Posterior vena cava (tissue), 2 donors: ENCODE measurements at regions of chr17 and their contacts with region 1.

Region 1: DNA sequence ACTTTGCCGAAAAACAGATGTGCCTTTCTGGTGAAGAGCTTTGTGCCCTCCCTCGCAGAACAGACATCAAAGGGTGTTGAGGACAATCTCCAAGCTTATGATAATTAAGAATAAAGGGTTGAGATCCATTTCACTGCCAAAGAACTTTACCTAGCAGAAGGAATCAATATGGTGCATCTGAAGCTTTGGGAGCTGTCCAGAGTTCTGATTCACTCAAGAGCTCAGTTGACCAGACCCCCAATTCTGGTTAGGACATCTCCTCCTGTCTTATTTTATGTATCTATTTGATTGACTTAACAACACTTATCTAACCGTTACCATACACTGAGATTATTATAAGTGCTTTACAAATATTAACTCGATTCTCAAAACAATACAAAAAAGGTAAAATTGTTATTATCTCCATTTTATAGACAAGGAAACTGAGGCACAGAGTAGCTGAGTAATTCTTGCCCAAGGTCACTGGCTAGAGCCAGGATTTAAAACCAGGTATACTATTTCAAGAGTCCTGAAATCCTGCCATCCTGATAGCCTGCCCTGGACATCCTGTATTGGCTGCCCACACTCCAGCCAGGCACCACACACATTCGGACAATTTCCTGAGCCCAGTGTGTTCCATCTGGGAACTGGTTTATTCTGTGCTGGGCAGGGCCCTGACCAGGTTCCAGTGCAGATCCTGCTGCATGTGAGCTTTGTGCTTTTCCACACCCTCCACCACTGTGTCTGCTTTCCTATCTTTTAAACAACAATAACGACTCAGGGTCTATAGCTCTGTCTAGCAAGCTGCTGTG is 29.8 kb downstream of the PITPNM3 start:
- DNase-seq: no peak

Region 2: DNA sequence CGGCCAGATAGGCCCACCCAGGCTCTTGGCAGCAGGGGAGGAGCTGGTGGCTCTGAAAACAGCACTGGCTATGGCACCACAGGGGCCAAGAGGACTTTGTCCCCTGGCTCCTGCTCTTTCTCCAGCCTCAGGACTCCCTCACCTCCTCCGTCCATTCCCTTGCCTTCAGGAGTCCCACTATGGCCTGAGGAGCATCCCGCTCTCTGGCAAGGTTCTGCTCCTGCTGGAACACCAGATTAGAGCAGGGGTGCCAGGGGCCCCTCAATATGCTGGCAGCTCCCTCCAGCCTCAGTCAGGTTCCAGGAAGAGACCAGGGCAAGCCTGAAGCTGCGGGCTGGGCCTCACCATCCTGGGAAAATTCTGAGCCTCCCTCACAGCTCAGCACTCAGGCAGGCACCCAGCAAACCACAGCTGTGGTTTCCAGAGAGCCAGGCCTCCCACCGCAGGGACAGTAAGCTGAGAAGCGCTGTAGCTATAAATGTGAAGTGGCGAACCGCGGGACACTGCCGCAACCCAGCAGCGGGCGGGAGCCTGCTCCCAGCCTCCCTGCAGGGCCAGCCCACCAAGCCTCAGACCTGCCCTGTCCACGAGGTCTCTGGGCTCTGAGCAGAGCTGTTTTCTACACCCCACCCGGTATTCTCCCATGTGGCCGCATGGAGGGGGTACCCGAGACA is 150.7 kb after region 1 on chr17:
- intact Hi-C with region 1: no loop called
- DNase-seq: peak; percentile 66

Region 3: GRCh38 chr17:7496470-7497183 is 970.1 kb after region 1 on chr17:
- intact Hi-C with region 1: loop called in 1 of 2 experiments (anchors 5 kb)
- DNase-seq: peak; percentile 80